K562 (cell line): ENCODE measurements at regions of chr4 and their contacts with region 1.

Region 1: DNA sequence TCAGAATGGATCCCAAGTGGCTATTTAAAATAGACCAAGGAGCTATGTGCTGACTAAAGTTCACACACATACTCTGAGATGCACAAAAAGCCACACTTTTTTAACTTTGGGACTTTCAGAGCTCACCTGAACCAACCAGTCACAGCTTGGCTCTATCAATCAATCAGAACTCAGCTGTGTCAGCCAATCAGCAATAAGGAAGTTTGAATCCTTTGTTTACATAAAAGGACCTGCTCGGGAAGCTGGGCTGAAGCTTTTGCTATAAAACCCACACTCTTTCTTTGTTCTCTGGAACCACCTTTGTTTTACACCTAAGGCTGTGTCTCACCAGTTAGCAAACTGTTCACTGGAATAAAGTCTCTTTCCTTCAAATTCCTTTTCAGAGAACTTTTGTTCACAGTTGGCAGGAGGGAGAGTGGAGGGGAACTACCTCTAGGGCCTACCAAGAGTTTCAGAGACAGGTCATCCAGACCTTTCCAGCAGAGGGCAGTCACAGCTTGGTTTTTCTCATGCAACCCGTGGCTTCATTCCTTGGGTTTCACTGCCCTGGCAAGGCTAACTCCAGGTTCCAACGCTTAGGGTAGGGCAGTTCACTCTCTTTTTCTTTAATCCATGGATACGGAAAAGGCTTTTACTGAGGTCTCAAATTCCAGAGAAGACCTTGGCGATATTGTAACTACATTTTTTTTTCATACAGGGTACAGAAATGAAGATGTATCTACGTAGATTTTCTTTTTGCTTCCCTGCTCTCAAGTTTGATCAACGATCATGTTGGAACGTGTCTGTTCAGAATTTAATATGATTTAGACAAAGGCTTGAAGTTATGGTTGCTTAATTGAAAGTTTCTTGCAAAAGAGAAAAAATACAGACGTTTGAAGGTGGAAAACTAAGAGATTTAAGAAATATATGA is 80.7 kb downstream of the GPRIN3 start:
- DNase-seq: peak; percentile 35 to 70 (median 46)
- ATAC-seq: peak; percentile 99
- H3K4me3 ChIP-seq: no peak overlapping the region
- H3K27ac ChIP-seq: no peak overlapping the region
- H3K4me1 ChIP-seq: no peaks in the 10 kb centered on the region; a peak in 1 of 5 replicates
- H3K27me3 ChIP-seq: no peaks in the 10 kb centered on the region
- CTCF ChIP-seq: peak; percentile 58 to 70 (median 67)
- EP300 ChIP-seq: no peak
- POLR2A ChIP-seq: no peak
- RAD21 ChIP-seq: peak; percentile 71 to 79

Region 2: GRCh38 chr4:89158884-89159503 is 67.9 kb before region 1 on chr4:
- CTCF ChIA-PET with region 1: no interaction called
- POLR2A ChIA-PET with region 1: no interaction called
- in situ Hi-C with region 1: no loop called
- intact Hi-C with region 1: loop called (anchors 5 kb)
- DNase-seq: peak; percentile 22 to 32 (median 24)
- ATAC-seq: peak; percentile 67; the same call in 2 of the 3 replicates
- H3K4me3 ChIP-seq: no peak overlapping the region
- H3K27ac ChIP-seq: no peak overlapping the region
- H3K4me1 ChIP-seq: no peaks in the 10 kb centered on the region
- H3K27me3 ChIP-seq: no peaks in the 10 kb centered on the region
- CTCF ChIP-seq: peak; percentile 35 to 78 (median 56); a peak in 5 of 6 replicates
- EP300 ChIP-seq: no peak
- POLR2A ChIP-seq: no peak
- RAD21 ChIP-seq: peak; percentile 76 to 78

Region 3: GRCh38 chr4:89184407-89184806 is 42.5 kb before region 1 on chr4:
- CTCF ChIA-PET with region 1: no interaction called
- POLR2A ChIA-PET with region 1: no interaction called
- in situ Hi-C with region 1: no loop called
- intact Hi-C with region 1: no loop called
- DNase-seq: no peak
- ATAC-seq: no peak
- H3K4me3 ChIP-seq: no peak overlapping the region
- H3K27ac ChIP-seq: no peak overlapping the region
- H3K4me1 ChIP-seq: no peaks in the 10 kb centered on the region
- H3K27me3 ChIP-seq: no peaks in the 10 kb centered on the region
- CTCF ChIP-seq: no peak
- EP300 ChIP-seq: no peak
- POLR2A ChIP-seq: no peak
- RAD21 ChIP-seq: no peak

Region 4: GRCh38 chr4:89298788-89299152 is 71.8 kb after region 1 on chr4:
- CTCF ChIA-PET with region 1: no interaction called
- POLR2A ChIA-PET with region 1: no interaction called
- in situ Hi-C with region 1: no loop called
- intact Hi-C with region 1: no loop called
- DNase-seq: no peak
- ATAC-seq: no peak
- H3K4me3 ChIP-seq: no peak overlapping the region
- H3K27ac ChIP-seq: no peak overlapping the region
- H3K4me1 ChIP-seq: no peaks in the 10 kb centered on the region
- H3K27me3 ChIP-seq: no peaks in the 10 kb centered on the region
- CTCF ChIP-seq: no peak
- EP300 ChIP-seq: no peak
- POLR2A ChIP-seq: no peak
- RAD21 ChIP-seq: no peak

Region 5: GRCh38 chr4:89316931-89317366 is 90.0 kb after region 1 on chr4:
- CTCF ChIA-PET with region 1: no interaction called
- POLR2A ChIA-PET with region 1: no interaction called
- in situ Hi-C with region 1: no loop called
- intact Hi-C with region 1: no loop called
- DNase-seq: no peak
- ATAC-seq: no peak
- H3K4me3 ChIP-seq: no peak overlapping the region
- H3K27ac ChIP-seq: no peak overlapping the region
- H3K4me1 ChIP-seq: no peaks in the 10 kb centered on the region
- H3K27me3 ChIP-seq: no peaks in the 10 kb centered on the region
- CTCF ChIP-seq: no peak
- EP300 ChIP-seq: no peak
- POLR2A ChIP-seq: no peak
- RAD21 ChIP-seq: no peak

Region 6: GRCh38 chr4:89434364-89434988 is 207.6 kb after region 1 on chr4:
- CTCF ChIA-PET with region 1: interaction called, 6 read pairs
- POLR2A ChIA-PET with region 1: no interaction called
- in situ Hi-C with region 1: no loop called
- intact Hi-C with region 1: loop called (anchors 5 kb)
- DNase-seq: peak in 1 of 4 experiments; percentile 5
- ATAC-seq: no peak; the same call in 2 of the 3 replicates
- H3K4me3 ChIP-seq: no peak overlapping the region
- H3K27ac ChIP-seq: no peak overlapping the region
- H3K4me1 ChIP-seq: no peaks in the 10 kb centered on the region
- H3K27me3 ChIP-seq: no peaks in the 10 kb centered on the region
- CTCF ChIP-seq: peak in 2 of 3 experiments; percentile 26 to 51; a peak in 2 of 6 replicates
- EP300 ChIP-seq: no peak
- POLR2A ChIP-seq: no peak
- RAD21 ChIP-seq: peak; percentile 67 to 74

Region 7: GRCh38 chr4:89898304-89898716 is 671.4 kb after region 1 on chr4:
- CTCF ChIA-PET with region 1: no interaction called
- POLR2A ChIA-PET with region 1: no interaction called
- in situ Hi-C with region 1: no loop called
- intact Hi-C with region 1: loop called (anchors 2 kb)
- DNase-seq: no peak
- ATAC-seq: no peak
- H3K4me3 ChIP-seq: no peak overlapping the region
- H3K27ac ChIP-seq: no peak overlapping the region
- H3K4me1 ChIP-seq: no peaks in the 10 kb centered on the region
- H3K27me3 ChIP-seq: no peaks in the 10 kb centered on the region
- CTCF ChIP-seq: no peak
- EP300 ChIP-seq: no peak
- POLR2A ChIP-seq: no peak
- RAD21 ChIP-seq: no peak